ENCODE measurements at regions of chr20 and their contacts with region 1.

Region 1: GRCh38 chr20:35146920-35147574 is at the start of gene EDEM2:
- DNase-seq: peak; percentile 96 to 97
- H3K4me3 ChIP-seq: peak within 1 kb of the TSS; percentile 86 to 94 (median 90)
- H3K27ac ChIP-seq: peak within 1 kb of the TSS; percentile 68; the same call in 1 of the 2 replicates
- H3K4me1 ChIP-seq: 0 out of 7 replicates have a peak, but pooled peaks cover 0 to 3% (median 0%) of the 10 kb centered on the region in 4 experiments
- H3K27me3 ChIP-seq: no peaks in the 10 kb centered on the region
- CTCF ChIP-seq: 0 out of 4 replicates have a peak, but pooled peaks of 1 of the 3 experiments have one; percentile 4
- EP300 ChIP-seq: no peak
- POLR2A ChIP-seq: peak in 1 of 2 experiments; percentile 57; a peak in 2 of 3 replicates
- RAD21 ChIP-seq: peak in 1 of 2 experiments; percentile 29; a peak in 2 of 4 replicates
- total RNA-seq, gene EDEM2: 19.6 and 21.5 TPM in 2 replicates

Region 2: DNA sequence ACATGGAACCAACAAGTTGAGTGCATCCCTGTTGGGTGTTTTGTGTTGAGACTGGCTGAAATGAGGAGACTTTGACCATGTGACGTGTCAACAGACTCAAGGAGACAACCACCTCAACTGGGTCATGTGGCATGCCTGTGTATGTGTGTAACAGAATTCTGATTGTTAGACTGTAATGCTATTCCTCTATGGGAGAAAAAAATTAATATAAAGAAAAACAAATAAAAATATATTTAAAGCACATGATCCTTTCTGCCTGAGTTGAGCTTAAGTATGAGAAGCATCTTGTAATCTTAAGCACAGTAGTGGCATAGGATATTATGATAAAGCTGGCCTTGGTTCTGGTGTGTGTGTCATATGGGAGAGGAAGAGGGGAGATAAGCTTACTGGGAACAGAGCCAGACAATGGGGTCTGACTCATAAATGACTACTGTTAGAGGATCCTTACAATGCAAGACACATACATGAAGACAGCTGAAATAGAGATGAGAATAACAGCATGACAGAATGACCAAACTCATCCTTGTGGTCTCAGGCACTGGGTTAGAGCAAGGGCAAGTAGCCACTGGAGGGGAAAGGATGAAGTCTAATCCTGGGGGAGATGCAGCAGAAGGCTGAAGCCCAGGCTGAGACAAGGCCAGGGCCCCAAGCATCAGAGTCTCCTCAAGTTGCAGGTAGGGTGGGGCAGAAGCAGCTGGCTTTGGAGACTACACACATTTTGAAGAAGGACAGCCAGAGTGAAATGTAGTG is 433.7 kb before region 1 on chr20:
- CTCF ChIA-PET with region 1: no interaction called
- POLR2A ChIA-PET with region 1: no interaction called
- DNase-seq: no peak
- H3K4me3 ChIP-seq: no peak overlapping the region
- H3K27ac ChIP-seq: no peak overlapping the region
- H3K4me1 ChIP-seq: peaks cover 0 to 4% (median 1%) of the 10 kb centered on the region in 4 experiments; a peak in 3 of 7 replicates
- H3K27me3 ChIP-seq: peaks cover 9 to 28% (median 21%) of the 10 kb centered on the region in 4 experiments
- CTCF ChIP-seq: no peak
- EP300 ChIP-seq: no peak
- POLR2A ChIP-seq: no peak
- RAD21 ChIP-seq: no peak

Region 3: DNA sequence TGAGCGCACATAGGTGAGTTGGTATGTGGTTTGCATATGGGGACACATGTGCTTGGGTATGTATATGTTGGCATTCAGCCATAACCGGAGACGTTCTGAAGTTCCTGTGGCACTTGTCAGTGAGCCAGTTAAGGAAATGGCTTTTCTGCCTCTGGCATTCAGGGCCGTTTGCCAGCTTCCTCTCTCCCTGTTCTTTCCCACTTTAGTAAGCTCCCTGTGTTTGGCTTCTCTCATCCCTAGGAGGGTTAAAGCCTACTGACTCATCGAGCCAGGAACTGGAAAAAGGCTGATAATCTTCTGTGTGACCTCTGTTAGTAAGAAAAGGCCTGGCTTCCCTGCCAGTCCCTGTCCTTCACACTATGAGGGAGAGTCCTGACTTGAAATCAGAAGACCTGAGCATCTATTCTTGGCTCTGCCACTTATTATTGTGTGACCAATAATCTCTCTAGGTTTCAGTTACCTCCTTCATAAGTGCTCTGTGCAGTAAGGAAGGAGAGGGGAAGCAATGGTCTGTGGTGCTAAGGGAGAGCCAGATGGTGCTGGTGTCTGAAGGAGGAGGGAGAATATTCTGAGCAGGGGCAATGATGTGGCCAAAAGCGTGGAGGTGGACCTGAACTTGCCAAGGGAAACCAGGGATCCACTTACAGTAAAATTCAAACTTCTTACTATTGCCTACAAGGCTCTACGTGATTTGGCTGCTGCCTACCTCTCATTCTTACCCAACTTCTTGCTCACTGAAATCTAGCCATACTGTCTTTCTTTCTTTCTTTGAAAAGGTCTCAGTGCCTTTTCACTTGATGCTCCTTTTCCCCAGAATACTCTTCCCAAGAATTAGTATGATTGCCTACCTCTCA is 239.2 kb before region 1 on chr20:
- CTCF ChIA-PET with region 1: no interaction called
- POLR2A ChIA-PET with region 1: no interaction called
- DNase-seq: no peak
- H3K4me3 ChIP-seq: no peak overlapping the region
- H3K27ac ChIP-seq: no peak overlapping the region
- H3K4me1 ChIP-seq: no peaks in the 10 kb centered on the region
- H3K27me3 ChIP-seq: no peaks in the 10 kb centered on the region
- CTCF ChIP-seq: no peak
- EP300 ChIP-seq: no peak
- POLR2A ChIP-seq: no peak
- RAD21 ChIP-seq: no peak

Region 4: GRCh38 chr20:35085477-35086225 is 61.4 kb before region 1 on chr20:
- CTCF ChIA-PET with region 1: no interaction called
- POLR2A ChIA-PET with region 1: no interaction called
- DNase-seq: no peak
- H3K4me3 ChIP-seq: no peak overlapping the region
- H3K27ac ChIP-seq: no peak overlapping the region
- H3K4me1 ChIP-seq: peaks cover 0 to 1% (median 1%) of the 10 kb centered on the region in 4 experiments; a peak in 2 of 7 replicates
- H3K27me3 ChIP-seq: no peaks in the 10 kb centered on the region
- CTCF ChIP-seq: no peak
- EP300 ChIP-seq: no peak
- POLR2A ChIP-seq: no peak
- RAD21 ChIP-seq: no peak

Region 5: GRCh38 chr20:35135867-35136586 is 11.0 kb before region 1 on chr20:
- CTCF ChIA-PET with region 1: interaction called, 10 read pairs
- POLR2A ChIA-PET with region 1: interaction called, 3 read pairs
- DNase-seq: no peak
- H3K4me3 ChIP-seq: no peak overlapping the region
- H3K27ac ChIP-seq: no peak overlapping the region
- H3K4me1 ChIP-seq: no peaks in the 10 kb centered on the region
- H3K27me3 ChIP-seq: no peaks in the 10 kb centered on the region
- CTCF ChIP-seq: no peak
- EP300 ChIP-seq: no peak
- POLR2A ChIP-seq: no peak
- RAD21 ChIP-seq: no peak

Region 6: GRCh38 chr20:35277531-35278395 is 130.7 kb after region 1 on chr20 and contains the start of gene MMP24OS:
- CTCF ChIA-PET with region 1: interaction called, 135 read pairs
- POLR2A ChIA-PET with region 1: interaction called, 6 read pairs
- DNase-seq: peak; percentile 86 to 91
- H3K4me3 ChIP-seq: peak within 1 kb of the TSS; percentile 40 to 73 (median 66)
- H3K27ac ChIP-seq: 0 out of 2 replicates have a peak within 1 kb of the TSS, but pooled peaks have one; percentile 22
- H3K4me1 ChIP-seq: peaks cover 5 to 9% (median 7%) of the 10 kb centered on the region in 4 experiments; a peak in 6 of 7 replicates
- H3K27me3 ChIP-seq: no peaks in the 10 kb centered on the region
- CTCF ChIP-seq: peak in 2 of 3 experiments; percentile 11 to 47; a peak in 2 of 4 replicates
- EP300 ChIP-seq: no peak
- POLR2A ChIP-seq: peak; percentile 79 to 91
- RAD21 ChIP-seq: peak in 1 of 2 experiments; percentile 5; a peak in 1 of 4 replicates
- total RNA-seq, gene MMP24OS: 19.0 and 22.2 TPM in 2 replicates

Measured in H1 (cell line).